ENCODE measurements at regions of chr6 and their contacts with region 1.

Region 1: GRCh38 chr6:71533939-71534379 is 245.3 kb downstream of the OGFRL1 start:
- DNase-seq: peak; percentile 54
- H3K4me3 ChIP-seq: no peak overlapping the region
- H3K27ac ChIP-seq: no peak overlapping the region
- H3K4me1 ChIP-seq: peaks cover 20% of the 10 kb centered on the region; the same call in 1 of the 2 replicates
- H3K27me3 ChIP-seq: no peaks in the 10 kb centered on the region

Region 2: GRCh38 chr6:72084992-72085569 is 551.1 kb after region 1 on chr6:
- in situ Hi-C with region 1: loop called (anchors 10 kb)
- DNase-seq: peak; percentile 46
- H3K4me3 ChIP-seq: no peak overlapping the region
- H3K27ac ChIP-seq: no peak overlapping the region
- H3K4me1 ChIP-seq: no peaks in the 10 kb centered on the region
- H3K27me3 ChIP-seq: 0 out of 2 replicates have a peak, but pooled peaks cover 3% of the 10 kb centered on the region

Measured in GM23248 (cell line).